ENCODE measurements at regions of chr17 and their contacts with region 1.

Region 1: DNA sequence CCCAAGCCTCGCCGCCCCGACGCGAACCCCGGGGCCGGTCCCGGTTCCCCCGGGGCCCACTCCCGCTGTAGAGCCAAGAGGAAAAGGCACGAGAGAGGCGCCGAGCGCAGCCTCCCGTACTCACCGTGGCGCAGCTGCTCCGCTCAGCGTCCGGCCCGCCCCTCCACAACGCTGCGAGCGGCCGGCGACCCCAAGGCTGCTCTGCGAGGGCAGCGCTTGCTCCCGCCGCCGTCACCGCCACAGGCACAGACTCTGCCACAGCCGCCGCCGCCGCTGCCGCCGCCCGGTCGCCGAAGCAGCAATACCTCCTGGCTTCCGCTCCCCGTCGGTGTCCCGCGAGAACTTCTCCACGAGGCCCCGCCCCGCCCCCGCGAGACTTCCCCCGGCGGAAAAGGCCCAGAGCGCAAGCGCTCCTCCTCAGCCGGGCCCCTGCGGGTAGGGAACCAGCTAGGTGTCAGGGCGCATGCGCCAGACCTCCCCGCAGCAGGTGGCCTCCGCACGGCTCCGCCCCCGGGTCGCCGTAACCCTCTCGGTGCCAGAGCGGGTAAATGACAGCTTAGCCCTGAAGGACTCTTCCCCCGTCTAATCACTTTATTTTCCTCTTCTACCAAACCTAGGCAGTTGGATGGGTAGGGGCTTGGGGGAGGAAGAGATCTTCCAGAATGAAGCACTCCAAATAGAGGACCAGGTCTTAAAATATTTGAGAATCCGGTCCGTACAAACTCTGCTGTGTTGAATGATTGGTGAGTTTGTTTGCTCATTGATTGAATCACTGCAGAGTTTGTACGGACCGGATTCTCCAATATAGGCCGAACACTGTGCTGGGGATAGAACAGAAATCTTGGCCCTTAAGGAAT is at the start of gene GRB2:
- DNase-seq: peak; percentile 100
- H3K4me3 ChIP-seq: peak within 1 kb of the TSS; percentile 82 to 86
- H3K27ac ChIP-seq: peak within 1 kb of the TSS; percentile 69 to 70
- H3K4me1 ChIP-seq: peaks cover 4 to 6% of the 10 kb centered on the region in 2 experiments; a peak in 3 of 4 replicates
- H3K27me3 ChIP-seq: no peaks in the 10 kb centered on the region; the same call in 1 of the 2 replicates
- CTCF ChIP-seq: no peak
- EP300 ChIP-seq: no peak; a peak in 1 of 4 replicates
- RAD21 ChIP-seq: no peak
- polyA plus RNA-seq, gene GRB2: 81.6 and 89.6 TPM in 2 replicates

Region 2: GRCh38 chr17:75289115-75289831 is 116.3 kb before region 1 on chr17 and contains the start of gene SLC25A19:
- CTCF ChIA-PET with region 1: interaction called, 10 read pairs
- POLR2A ChIA-PET with region 1: interaction called, 5 read pairs
- DNase-seq: peak; percentile 99
- H3K4me3 ChIP-seq: peak within 1 kb of the TSS; percentile 68 to 80
- H3K27ac ChIP-seq: peak within 1 kb of the TSS; percentile 73 to 80
- H3K4me1 ChIP-seq: peaks cover 4 to 5% of the 10 kb centered on the region in 2 experiments; a peak in 2 of 4 replicates
- H3K27me3 ChIP-seq: no peaks in the 10 kb centered on the region
- CTCF ChIP-seq: peak; percentile 26; the same call in 1 of the 2 replicates
- EP300 ChIP-seq: no peak
- RAD21 ChIP-seq: 0 out of 2 replicates have a peak, but pooled peaks have one; percentile 34
- polyA plus RNA-seq, gene SLC25A19: 11.7 and 13.2 TPM in 2 replicates

Region 3: DNA sequence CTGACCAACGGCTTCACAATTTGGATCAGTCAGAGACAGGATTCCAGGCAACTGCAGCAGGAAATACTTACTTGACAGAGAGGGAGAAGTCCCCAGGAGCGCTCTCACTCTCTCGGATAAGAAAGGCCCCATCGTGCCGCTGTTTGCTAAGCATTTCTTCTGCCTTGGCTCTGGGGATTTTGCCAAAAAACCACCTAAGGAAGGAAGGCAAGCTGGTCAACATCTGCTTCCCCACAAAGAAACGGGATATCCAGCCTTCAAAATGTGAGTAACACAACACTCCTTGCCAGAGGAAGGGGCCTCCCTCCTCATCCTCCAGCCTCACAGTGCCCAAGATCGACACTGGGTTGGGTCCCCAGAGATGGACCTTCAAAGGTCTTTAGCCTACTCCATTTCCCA is 79.8 kb before region 1 on chr17:
- CTCF ChIA-PET with region 1: interaction called, 65 read pairs
- POLR2A ChIA-PET with region 1: interaction called, 3 read pairs
- DNase-seq: no peak
- H3K4me3 ChIP-seq: no peak overlapping the region
- H3K27ac ChIP-seq: peak overlapping the region in 1 of 2 experiments; percentile 62; a peak in 2 of 4 replicates
- H3K4me1 ChIP-seq: peaks cover 3 to 16% of the 10 kb centered on the region in 2 experiments; a peak in 3 of 4 replicates
- H3K27me3 ChIP-seq: no peaks in the 10 kb centered on the region
- CTCF ChIP-seq: no peak
- EP300 ChIP-seq: no peak
- RAD21 ChIP-seq: no peak

Region 4: GRCh38 chr17:75345514-75346167 is 60.0 kb before region 1 on chr17:
- CTCF ChIA-PET with region 1: interaction called, 10 read pairs
- POLR2A ChIA-PET with region 1: no interaction called
- DNase-seq: no peak
- H3K4me3 ChIP-seq: no peak overlapping the region
- H3K27ac ChIP-seq: no peak overlapping the region
- H3K4me1 ChIP-seq: peaks cover 11% of the 10 kb centered on the region in 2 experiments; a peak in 1 of 4 replicates
- H3K27me3 ChIP-seq: no peaks in the 10 kb centered on the region
- CTCF ChIP-seq: no peak
- EP300 ChIP-seq: no peak
- RAD21 ChIP-seq: no peak

Region 5: GRCh38 chr17:75367317-75367716 is 38.3 kb before region 1 on chr17:
- CTCF ChIA-PET with region 1: no interaction called
- POLR2A ChIA-PET with region 1: no interaction called
- DNase-seq: no peak
- H3K4me3 ChIP-seq: no peak overlapping the region
- H3K27ac ChIP-seq: no peak overlapping the region
- H3K4me1 ChIP-seq: peaks cover 8 to 28% of the 10 kb centered on the region in 2 experiments; a peak in 3 of 4 replicates
- H3K27me3 ChIP-seq: no peaks in the 10 kb centered on the region
- CTCF ChIP-seq: no peak
- EP300 ChIP-seq: no peak
- RAD21 ChIP-seq: no peak

Region 6: GRCh38 chr17:75393523-75394331 is 11.9 kb before region 1 on chr17:
- CTCF ChIA-PET with region 1: interaction called, 28 read pairs
- POLR2A ChIA-PET with region 1: interaction called, 20 read pairs
- DNase-seq: peak; percentile 98
- H3K4me3 ChIP-seq: peak overlapping the region; percentile 80 to 99
- H3K27ac ChIP-seq: peak overlapping the region; percentile 71 to 95
- H3K4me1 ChIP-seq: peaks cover 12 to 21% of the 10 kb centered on the region in 2 experiments
- H3K27me3 ChIP-seq: no peaks in the 10 kb centered on the region
- CTCF ChIP-seq: peak; percentile 15; the same call in 1 of the 2 replicates
- EP300 ChIP-seq: peak in 1 of 2 experiments; percentile 45; a peak in 1 of 4 replicates
- RAD21 ChIP-seq: peak; percentile 11; the same call in 1 of the 2 replicates